Activated CD8-positive, alpha-beta T cell treated with anti-CD3 and anti-CD28 coated beads for 36 hours (primary cell): ENCODE measurements at regions of chr2 and their contacts with region 1.

Region 1: GRCh38 chr2:230987137-230988020 is 8.5 kb upstream of the SPATA3 start:
- DNase-seq: peak; percentile 81
- ATAC-seq: peak; percentile 35
- H3K4me3 Mint-ChIP-seq: peak overlapping the region; percentile 67
- H3K27ac Mint-ChIP-seq: peak overlapping the region; percentile 71
- H3K4me1 Mint-ChIP-seq: peaks cover 40% of the 10 kb centered on the region
- H3K27me3 Mint-ChIP-seq: peaks cover 18% of the 10 kb centered on the region
- CTCF ChIP-seq: peak; percentile 97

Region 2: GRCh38 chr2:230824406-230824978 is 162.9 kb before region 1 on chr2:
- CTCF ChIA-PET with region 1: interaction called, 75 read pairs
- POLR2A ChIA-PET with region 1: interaction called, 5 read pairs
- intact Hi-C with region 1: loop called (anchors 5 kb)
- DNase-seq: peak; percentile 65
- ATAC-seq: peak; percentile 81
- H3K4me3 Mint-ChIP-seq: no peak overlapping the region
- H3K27ac Mint-ChIP-seq: no peak overlapping the region
- H3K4me1 Mint-ChIP-seq: peaks cover 7% of the 10 kb centered on the region
- H3K27me3 Mint-ChIP-seq: peaks cover 30% of the 10 kb centered on the region
- CTCF ChIP-seq: peak; percentile 69

Region 3: GRCh38 chr2:230864598-230865306 is 122.6 kb before region 1 on chr2 and contains the start of gene ITM2C:
- CTCF ChIA-PET with region 1: interaction called, 18 read pairs
- POLR2A ChIA-PET with region 1: interaction called, 3 read pairs
- intact Hi-C with region 1: no loop called
- DNase-seq: peak; percentile 82
- ATAC-seq: peak; percentile 85
- H3K4me3 Mint-ChIP-seq: peak within 1 kb of the TSS; percentile 73
- H3K27ac Mint-ChIP-seq: peak within 1 kb of the TSS; percentile 55
- H3K4me1 Mint-ChIP-seq: peaks cover 50% of the 10 kb centered on the region
- H3K27me3 Mint-ChIP-seq: peaks cover 2% of the 10 kb centered on the region
- CTCF ChIP-seq: peak; percentile 13
- total RNA-seq, gene ITM2C: 43.2 to 43.4 TPM

Region 4: DNA sequence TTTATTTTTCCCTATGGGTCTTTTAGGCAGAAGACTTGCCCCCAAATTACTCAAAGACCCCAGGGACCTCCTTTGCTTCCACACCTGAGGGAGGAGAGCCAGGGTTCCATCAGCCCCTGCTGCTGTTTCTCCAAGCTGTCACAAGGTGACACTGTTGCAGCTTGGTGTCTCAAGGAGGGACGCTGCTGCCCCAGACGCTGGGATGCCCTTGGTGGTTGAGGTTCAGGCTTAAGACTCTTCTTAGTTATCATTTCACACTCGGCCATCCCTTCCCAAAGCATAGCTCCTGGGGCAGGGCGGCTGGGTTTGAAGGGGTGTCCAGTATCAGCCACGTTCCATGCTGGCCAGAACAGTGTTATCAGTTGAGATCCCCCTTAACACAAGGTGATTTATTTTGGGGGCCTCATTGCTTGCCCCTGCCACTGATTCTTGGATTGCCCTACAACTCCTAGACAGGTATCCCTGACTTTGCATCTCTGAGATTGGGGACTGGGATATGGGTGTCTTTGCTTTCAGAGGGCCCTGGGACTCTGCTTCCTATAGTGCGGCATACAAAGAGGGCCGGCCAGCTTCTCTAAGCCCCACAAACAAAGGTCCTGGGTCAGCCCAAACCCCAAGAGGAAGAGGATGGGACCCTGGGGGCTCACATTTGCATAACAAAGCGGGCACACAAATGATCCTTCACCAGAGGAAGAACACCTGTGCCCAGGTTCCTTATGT is 85.0 kb before region 1 on chr2:
- CTCF ChIA-PET with region 1: interaction called, 437 read pairs
- POLR2A ChIA-PET with region 1: interaction called, 16 read pairs
- intact Hi-C with region 1: loop called (anchors 1 kb)
- DNase-seq: peak; percentile 79
- ATAC-seq: peak; percentile 51
- H3K4me3 Mint-ChIP-seq: no peak overlapping the region
- H3K27ac Mint-ChIP-seq: no peak overlapping the region
- H3K4me1 Mint-ChIP-seq: peaks cover 62% of the 10 kb centered on the region
- H3K27me3 Mint-ChIP-seq: no peaks in the 10 kb centered on the region
- CTCF ChIP-seq: peak; percentile 93

Region 5: DNA sequence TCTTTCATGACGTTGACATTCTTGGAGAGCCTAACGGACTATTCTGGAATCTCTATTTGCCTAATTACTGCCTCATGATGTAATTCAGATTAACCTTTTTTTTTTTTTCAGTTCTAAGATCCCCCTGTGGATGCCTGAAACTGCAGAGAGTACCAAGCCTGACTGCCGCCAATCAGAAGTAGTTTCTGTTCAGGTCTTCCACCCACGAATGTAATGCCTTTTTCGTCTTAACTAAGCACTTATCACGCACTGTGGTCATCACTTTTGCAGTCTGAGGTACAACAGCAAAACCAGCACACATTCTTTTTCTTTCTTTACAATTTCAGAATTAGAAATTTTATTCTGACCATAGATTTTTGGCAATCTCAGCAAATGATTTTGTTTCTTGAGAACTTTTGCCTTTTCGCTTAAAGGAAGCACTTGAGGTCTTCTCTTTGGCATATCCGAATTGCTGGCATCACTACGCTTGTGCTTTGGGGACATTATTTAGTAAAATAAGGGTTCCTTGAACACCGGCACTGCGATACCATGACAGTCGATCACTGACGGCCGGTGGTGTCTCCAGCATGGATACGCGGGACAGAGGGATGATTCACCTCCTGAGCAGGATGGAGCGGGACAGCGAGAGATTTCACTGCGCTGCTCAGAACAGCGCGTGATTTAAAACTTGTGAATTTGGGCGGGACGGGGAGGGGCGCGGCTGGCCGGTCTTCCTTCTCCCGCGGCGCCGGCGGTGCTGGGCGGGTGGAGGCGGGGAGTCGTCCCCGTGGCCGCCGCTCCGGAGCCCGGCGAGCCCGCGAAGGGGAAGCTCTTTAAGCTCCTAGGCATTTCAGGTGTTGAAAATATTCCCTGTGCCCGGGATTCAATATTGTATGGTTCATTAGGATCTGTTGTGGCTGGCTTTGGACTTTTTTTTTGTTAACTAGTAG is 30.3 kb before region 1 on chr2:
- CTCF ChIA-PET with region 1: interaction called, 16 read pairs
- POLR2A ChIA-PET with region 1: interaction called, 15 read pairs
- intact Hi-C with region 1: no loop called
- DNase-seq: peak; percentile 78
- ATAC-seq: peak; percentile 91
- H3K4me3 Mint-ChIP-seq: peak overlapping the region; percentile 84
- H3K27ac Mint-ChIP-seq: peak overlapping the region; percentile 96
- H3K4me1 Mint-ChIP-seq: peaks cover 45% of the 10 kb centered on the region
- H3K27me3 Mint-ChIP-seq: peaks cover 25% of the 10 kb centered on the region
- CTCF ChIP-seq: no peak

Region 6: GRCh38 chr2:231050018-231050901 is 62.9 kb after region 1 on chr2:
- CTCF ChIA-PET with region 1: interaction called, 11 read pairs
- POLR2A ChIA-PET with region 1: no interaction called
- intact Hi-C with region 1: no loop called
- DNase-seq: no peak
- ATAC-seq: no peak
- H3K4me3 Mint-ChIP-seq: no peak overlapping the region
- H3K27ac Mint-ChIP-seq: no peak overlapping the region
- H3K4me1 Mint-ChIP-seq: peaks cover 16% of the 10 kb centered on the region
- H3K27me3 Mint-ChIP-seq: peaks cover 10% of the 10 kb centered on the region
- CTCF ChIP-seq: no peak